PC-3 (cell line): ENCODE measurements at regions of chrX and their contacts with region 1.

Region 1: GRCh38 chrX:51420610-51421009 is 75.8 kb downstream of the NUDT11 start:
- DNase-seq: peak; percentile 59
- ATAC-seq: no peak
- H3K4me3 ChIP-seq: no peak overlapping the region
- H3K27ac ChIP-seq: no peak overlapping the region
- H3K4me1 ChIP-seq: no peaks in the 10 kb centered on the region
- H3K27me3 ChIP-seq: peaks cover 16% of the 10 kb centered on the region; the same call in 1 of the 2 replicates
- CTCF ChIP-seq: peak; percentile 73

Region 2: GRCh38 chrX:51144852-51145442 is 275.7 kb before region 1 on chrX:
- CTCF ChIA-PET with region 1: no interaction called
- POLR2A ChIA-PET with region 1: no interaction called
- intact Hi-C with region 1: loop called (anchors 5 kb)
- DNase-seq: peak; percentile 48
- ATAC-seq: peak; percentile 31; the same call in 1 of the 2 replicates
- H3K4me3 ChIP-seq: no peak overlapping the region
- H3K27ac ChIP-seq: no peak overlapping the region
- H3K4me1 ChIP-seq: no peaks in the 10 kb centered on the region
- H3K27me3 ChIP-seq: no peaks in the 10 kb centered on the region
- CTCF ChIP-seq: peak; percentile 75

Region 3: GRCh38 chrX:51336584-51336983 is 84.0 kb before region 1 on chrX:
- CTCF ChIA-PET with region 1: interaction called, 9 read pairs
- POLR2A ChIA-PET with region 1: no interaction called
- intact Hi-C with region 1: loop called (anchors 2 kb)
- DNase-seq: peak; percentile 47
- ATAC-seq: peak; percentile 64
- H3K4me3 ChIP-seq: no peak overlapping the region
- H3K27ac ChIP-seq: no peak overlapping the region
- H3K4me1 ChIP-seq: no peaks in the 10 kb centered on the region
- H3K27me3 ChIP-seq: peaks cover 13% of the 10 kb centered on the region
- CTCF ChIP-seq: peak; percentile 60